Activated naive CD4-positive, alpha-beta T cell treated with anti-CD3 and anti-CD28 coated beads for 36 hours (primary cell): ENCODE measurements at regions of chr6 and their contacts with region 1.

Region 1: GRCh38 chr6:10685092-10685915 is 9.1 kb downstream of the C6orf52 start:
- DNase-seq: no peak
- H3K4me3 Mint-ChIP-seq: no peak overlapping the region
- H3K27ac Mint-ChIP-seq: no peak overlapping the region
- H3K4me1 Mint-ChIP-seq: peaks cover 42% of the 10 kb centered on the region
- H3K27me3 Mint-ChIP-seq: peaks cover 2% of the 10 kb centered on the region

Region 2: DNA sequence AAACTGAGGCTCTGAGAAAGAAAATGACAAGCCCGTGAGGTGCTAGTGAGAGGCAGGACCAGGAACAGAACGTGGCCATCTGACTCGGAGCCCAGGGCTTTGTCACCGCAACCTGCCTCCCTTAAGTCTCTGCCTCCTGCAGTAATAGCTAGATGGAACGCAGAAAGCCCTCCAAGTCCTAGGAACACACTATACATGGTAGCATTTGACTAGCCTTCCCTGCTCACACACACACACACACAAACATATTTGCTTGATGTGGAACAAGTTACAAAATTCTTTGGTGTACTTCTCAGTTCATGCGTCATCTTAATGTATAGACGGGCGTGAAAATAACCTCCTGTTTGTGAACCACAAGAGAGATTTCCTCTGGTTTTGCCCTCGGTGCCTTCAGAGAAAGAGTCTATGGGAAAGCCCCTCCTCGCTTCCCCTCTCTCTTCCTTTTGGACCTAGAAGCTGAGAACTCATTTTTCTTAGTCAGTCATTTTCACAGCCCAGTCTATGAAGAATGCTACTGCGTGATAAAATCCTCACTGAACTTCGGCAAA is 29.7 kb before region 1 on chr6:
- CTCF ChIA-PET with region 1: no interaction called
- intact Hi-C with region 1: loop called (anchors 2 kb)
- DNase-seq: peak; percentile 63
- H3K4me3 Mint-ChIP-seq: peak overlapping the region; percentile 9
- H3K27ac Mint-ChIP-seq: no peak overlapping the region
- H3K4me1 Mint-ChIP-seq: peaks cover 15% of the 10 kb centered on the region
- H3K27me3 Mint-ChIP-seq: peaks cover 28% of the 10 kb centered on the region

Region 3: DNA sequence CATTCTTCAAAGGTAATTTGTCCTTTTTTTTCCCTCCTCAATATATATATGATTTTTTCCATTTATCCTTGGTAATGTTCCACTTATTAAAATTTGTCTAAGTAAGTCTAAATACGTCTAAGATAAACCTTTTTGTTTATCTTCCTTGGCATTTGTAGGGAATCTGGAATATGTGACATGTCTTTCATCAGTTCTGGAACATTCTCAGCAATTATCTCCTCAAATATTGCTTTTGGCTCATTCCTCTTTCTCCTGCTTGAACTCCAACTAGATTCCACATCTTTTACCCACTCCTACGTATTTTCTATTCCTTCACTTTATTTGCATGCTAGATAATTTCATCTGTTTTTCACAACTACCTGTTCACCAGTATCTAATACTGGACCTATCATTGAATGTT is 261.4 kb after region 1 on chr6:
- CTCF ChIA-PET with region 1: no interaction called
- intact Hi-C with region 1: no loop called
- DNase-seq: no peak
- H3K4me3 Mint-ChIP-seq: no peak overlapping the region
- H3K27ac Mint-ChIP-seq: no peak overlapping the region
- H3K4me1 Mint-ChIP-seq: no peaks in the 10 kb centered on the region
- H3K27me3 Mint-ChIP-seq: peaks cover 12% of the 10 kb centered on the region